ENCODE measurements at regions of chr3 and their contacts with region 1.

Region 1: DNA sequence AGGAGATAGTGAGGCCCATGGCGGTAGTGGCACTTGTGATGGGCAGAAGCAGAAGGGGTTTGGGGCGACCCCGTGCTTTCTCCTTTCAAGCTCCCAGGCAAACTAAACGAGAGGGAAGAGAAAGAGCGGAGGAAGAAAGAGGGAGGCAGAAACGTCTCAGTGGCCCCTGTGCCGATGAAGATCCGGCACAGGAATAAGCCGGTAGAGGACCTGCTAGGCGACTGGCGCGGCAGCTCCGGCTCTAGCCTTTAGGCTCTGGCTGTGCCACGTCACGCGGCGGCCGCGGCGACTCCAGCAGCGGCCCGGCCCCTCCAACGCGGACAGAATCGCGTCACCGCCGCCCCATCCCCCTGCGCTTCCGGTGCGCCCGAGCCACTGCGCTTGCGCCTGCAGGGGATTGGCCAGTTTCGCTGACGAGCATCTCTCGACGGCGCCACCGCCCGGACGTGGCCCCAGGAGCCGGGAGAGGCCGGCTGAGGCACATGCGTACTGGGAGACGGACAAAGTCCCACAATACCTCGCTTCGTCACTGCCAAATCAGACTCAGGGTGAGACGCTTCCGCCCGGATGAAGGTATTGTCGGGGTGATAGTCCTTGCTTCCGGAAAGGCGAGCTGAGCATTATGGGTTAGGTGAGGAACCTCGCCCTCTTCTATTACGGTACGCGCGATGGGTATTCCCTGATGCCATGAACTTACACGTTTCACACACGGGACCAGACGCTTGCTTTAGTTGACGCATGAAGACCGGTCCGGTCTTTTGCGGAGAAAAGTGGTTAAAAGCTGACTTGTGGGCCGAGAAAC is at the start of gene ARF4:
- DNase-seq: peak; percentile 99 to 100
- ATAC-seq: peak; percentile 96 to 97 (median 96)
- H3K4me3 ChIP-seq: peak within 1 kb of the TSS; percentile 67 to 97 (median 86)
- H3K27ac ChIP-seq: peak within 1 kb of the TSS; percentile 84 to 99 (median 96)
- H3K4me1 ChIP-seq: peaks cover 5 to 60% (median 51%) of the 10 kb centered on the region in 9 donors
- H3K27me3 ChIP-seq: no peaks in the 10 kb centered on the region
- CTCF ChIP-seq: peak in 6 of 9 donors; percentile 5 to 59 (median 37)
- total RNA-seq, gene ARF4: 56.4 to 83.3 (median 73.7) TPM

Region 2: GRCh38 chr3:57555738-57556458 is 41.4 kb before region 1 on chr3 and contains the start of gene PDE12:
- intact Hi-C with region 1: loop called in 6 of 10 experiments (anchors 2 to 5 kb)
- DNase-seq: peak; percentile 79 to 89
- ATAC-seq: peak; percentile 94 to 96 (median 96)
- H3K4me3 ChIP-seq: peak within 1 kb of the TSS; percentile 60 to 92 (median 78)
- H3K27ac ChIP-seq: peak within 1 kb of the TSS; percentile 74 to 93 (median 87)
- H3K4me1 ChIP-seq: peaks cover 4 to 40% (median 35%) of the 10 kb centered on the region in 9 donors
- H3K27me3 ChIP-seq: no peaks in the 10 kb centered on the region
- CTCF ChIP-seq: peak in 1 of 9 donors; percentile 3
- total RNA-seq, gene PDE12: 10.3 to 14.6 (median 12.9) TPM

Region 3: GRCh38 chr3:57743496-57743895 is 146.2 kb after region 1 on chr3:
- intact Hi-C with region 1: no loop called
- DNase-seq: no peak
- ATAC-seq: no peak
- H3K4me3 ChIP-seq: no peak overlapping the region
- H3K27ac ChIP-seq: no peak overlapping the region
- H3K4me1 ChIP-seq: peaks cover 0 to 6% (median 3%) of the 10 kb centered on the region in 9 donors
- H3K27me3 ChIP-seq: no peaks in the 10 kb centered on the region
- CTCF ChIP-seq: no peak

Region 4: GRCh38 chr3:57826245-57826951 is 229.1 kb after region 1 on chr3:
- intact Hi-C with region 1: no loop called
- DNase-seq: no peak
- ATAC-seq: no peak
- H3K4me3 ChIP-seq: no peak overlapping the region
- H3K27ac ChIP-seq: no peak overlapping the region
- H3K4me1 ChIP-seq: peaks cover 4 to 44% (median 33%) of the 10 kb centered on the region in 9 donors
- H3K27me3 ChIP-seq: no peaks in the 10 kb centered on the region
- CTCF ChIP-seq: peak in 6 of 9 donors; percentile 16 to 59 (median 46)

Measured in heart right ventricle (tissue), 16 donors.